GM12878 (cell line): ENCODE measurements at regions of chr20 and their contacts with region 1.

Region 1: DNA sequence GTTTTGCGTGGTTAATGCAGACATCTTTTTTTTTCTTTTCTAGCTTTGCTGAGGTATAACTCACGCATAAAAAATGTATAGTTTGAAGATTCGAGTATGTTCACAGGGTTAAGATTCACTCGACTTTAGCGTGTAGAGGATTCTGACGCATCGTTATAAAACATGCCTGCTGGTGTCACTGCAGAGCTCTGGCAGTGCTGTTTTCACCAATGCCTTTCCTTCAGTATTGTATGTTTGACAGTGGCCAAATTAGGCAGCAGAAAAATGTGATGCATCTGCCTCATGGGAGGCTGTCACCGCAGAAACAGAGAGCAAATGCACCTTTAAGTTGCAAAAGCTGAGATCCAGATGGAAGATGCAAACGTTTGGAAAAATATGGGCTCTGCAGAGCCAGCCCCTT is 18.0 kb upstream of the SIRPB2 start:
- DNase-seq: no peak
- ATAC-seq: peak; percentile 98
- H3K4me3 ChIP-seq: no peak overlapping the region
- H3K27ac ChIP-seq: no peak overlapping the region
- H3K4me1 ChIP-seq: 0 out of 2 replicates have a peak, but pooled peaks cover 3% of the 10 kb centered on the region
- H3K27me3 ChIP-seq: peaks cover 0 to 8% of the 10 kb centered on the region in 2 experiments; a peak in 1 of 4 replicates
- CTCF ChIP-seq: peak; percentile 59 to 68 (median 60)
- EP300 ChIP-seq: no peak
- POLR2A ChIP-seq: no peak
- RAD21 ChIP-seq: peak; percentile 87

Region 2: GRCh38 chr20:1437235-1437904 is 71.9 kb before region 1 on chr20:
- CTCF ChIA-PET with region 1: interaction called, 65 read pairs
- POLR2A ChIA-PET with region 1: no interaction called
- RAD21 ChIA-PET with region 1: interaction called, 16 read pairs
- SMC1A ChIA-PET with region 1: no interaction called
- in situ Hi-C with region 1: no loop called
- intact Hi-C with region 1: no loop called
- DNase-seq: peak; percentile 40
- ATAC-seq: peak; percentile 77
- H3K4me3 ChIP-seq: no peak overlapping the region
- H3K27ac ChIP-seq: no peak overlapping the region
- H3K4me1 ChIP-seq: peaks cover 11% of the 10 kb centered on the region
- H3K27me3 ChIP-seq: no peaks in the 10 kb centered on the region
- CTCF ChIP-seq: peak; percentile 82 to 84 (median 83)
- EP300 ChIP-seq: no peak
- POLR2A ChIP-seq: no peak
- RAD21 ChIP-seq: peak; percentile 91

Region 3: GRCh38 chr20:1535420-1536175 is 26.4 kb after region 1 on chr20:
- CTCF ChIA-PET with region 1: interaction called, 14 read pairs
- POLR2A ChIA-PET with region 1: no interaction called
- RAD21 ChIA-PET with region 1: interaction called, 7 read pairs
- SMC1A ChIA-PET with region 1: interaction called, 15 read pairs
- in situ Hi-C with region 1: no loop called
- intact Hi-C with region 1: loop called (anchors 1 kb)
- DNase-seq: peak; percentile 96
- ATAC-seq: peak; percentile 87
- H3K4me3 ChIP-seq: no peak overlapping the region
- H3K27ac ChIP-seq: peak overlapping the region; percentile 40
- H3K4me1 ChIP-seq: peaks cover 38% of the 10 kb centered on the region
- H3K27me3 ChIP-seq: peaks cover 0 to 1% of the 10 kb centered on the region in 2 experiments; a peak in 1 of 4 replicates
- CTCF ChIP-seq: no peak
- EP300 ChIP-seq: peak in 1 of 2 experiments; percentile 86; a peak in 2 of 4 replicates
- POLR2A ChIP-seq: no peak
- RAD21 ChIP-seq: no peak

Region 4: DNA sequence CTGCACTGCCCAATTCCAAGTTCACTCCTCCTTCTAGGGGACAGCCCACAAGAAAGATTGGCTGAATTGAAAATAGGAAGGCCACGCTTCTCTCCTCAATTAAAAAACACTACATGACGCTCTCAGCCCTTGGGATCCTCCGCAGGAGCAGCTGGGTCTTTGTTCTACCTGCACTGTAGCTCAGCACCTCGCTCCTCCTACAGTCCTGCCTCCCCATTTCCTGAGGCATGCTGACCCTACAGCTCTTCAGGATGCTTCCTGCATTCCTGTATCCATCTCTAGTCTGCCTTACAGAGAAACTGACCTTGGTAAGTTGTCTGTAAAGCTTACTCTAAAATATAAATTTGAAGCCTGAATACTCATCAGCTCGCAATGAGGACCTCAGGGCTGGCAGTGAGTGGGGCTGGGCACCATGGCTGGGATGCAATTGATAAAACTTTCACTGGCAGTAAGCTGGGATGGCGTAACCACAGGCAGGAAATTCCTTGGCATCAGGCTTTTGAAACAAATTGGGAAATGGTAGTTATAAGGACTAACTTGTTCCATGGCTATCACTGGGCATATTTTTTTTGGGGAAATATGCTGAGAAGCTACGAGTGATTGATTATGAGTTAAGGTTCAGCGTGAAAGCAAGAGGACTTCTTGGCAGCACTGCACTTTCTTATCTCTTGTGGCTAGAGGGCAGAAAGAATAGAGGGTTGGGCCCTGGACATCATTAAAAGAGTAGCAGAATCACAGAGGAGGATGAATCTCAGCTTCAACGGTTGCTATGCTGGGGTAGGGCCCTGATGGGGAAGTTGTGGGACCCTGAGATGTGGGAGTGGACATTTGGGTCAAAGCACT is 122.3 kb after region 1 on chr20:
- CTCF ChIA-PET with region 1: interaction called, 7 read pairs
- POLR2A ChIA-PET with region 1: no interaction called
- RAD21 ChIA-PET with region 1: interaction called, 10 read pairs
- SMC1A ChIA-PET with region 1: interaction called, 8 read pairs
- in situ Hi-C with region 1: no loop called
- intact Hi-C with region 1: loop called (anchors 5 kb)
- DNase-seq: no peak
- ATAC-seq: peak; percentile 51
- H3K4me3 ChIP-seq: no peak overlapping the region
- H3K27ac ChIP-seq: no peak overlapping the region
- H3K4me1 ChIP-seq: peaks cover 9% of the 10 kb centered on the region
- H3K27me3 ChIP-seq: no peaks in the 10 kb centered on the region
- CTCF ChIP-seq: no peak
- EP300 ChIP-seq: no peak
- POLR2A ChIP-seq: no peak
- RAD21 ChIP-seq: no peak

Region 5: DNA sequence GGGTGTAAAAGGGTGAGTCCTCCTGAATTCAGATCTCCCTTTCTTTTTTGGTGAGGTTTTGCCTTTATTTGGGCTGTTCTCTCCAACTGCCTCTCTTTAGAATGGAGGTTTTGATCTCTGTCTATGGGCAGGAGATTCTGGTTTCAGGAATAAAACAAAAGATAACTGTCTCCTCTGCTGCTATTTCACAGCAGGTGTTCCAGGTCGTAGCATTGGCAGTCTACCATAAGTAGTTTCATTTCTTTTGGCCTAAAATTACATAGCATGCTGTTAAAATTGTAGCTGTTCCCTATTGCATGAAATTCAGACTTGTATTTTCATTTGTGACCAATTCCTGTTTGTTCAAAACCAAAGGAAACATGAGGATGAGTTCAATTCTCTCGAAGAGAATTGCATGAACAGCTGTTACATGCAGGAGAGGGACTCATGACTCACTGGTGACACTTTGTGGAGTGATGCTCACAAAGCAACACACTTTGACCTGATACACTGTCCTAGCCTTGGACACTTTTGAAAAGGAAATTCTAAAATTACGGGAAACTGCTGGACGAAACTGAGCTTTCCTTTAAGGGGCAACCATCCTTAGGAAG is 225.1 kb after region 1 on chr20:
- CTCF ChIA-PET with region 1: interaction called, 53 read pairs
- POLR2A ChIA-PET with region 1: no interaction called
- RAD21 ChIA-PET with region 1: interaction called, 44 read pairs
- SMC1A ChIA-PET with region 1: interaction called, 138 read pairs
- in situ Hi-C with region 1: no loop called
- intact Hi-C with region 1: loop called (anchors 1 kb)
- DNase-seq: no peak
- ATAC-seq: peak; percentile 91
- H3K4me3 ChIP-seq: no peak overlapping the region
- H3K27ac ChIP-seq: no peak overlapping the region; the same call in 1 of the 2 replicates
- H3K4me1 ChIP-seq: peaks cover 16% of the 10 kb centered on the region
- H3K27me3 ChIP-seq: no peaks in the 10 kb centered on the region
- CTCF ChIP-seq: peak; percentile 48 to 69 (median 60); a peak in 5 of 6 replicates
- EP300 ChIP-seq: no peak
- POLR2A ChIP-seq: no peak
- RAD21 ChIP-seq: peak; percentile 97

Region 6: GRCh38 chr20:1764136-1765033 is 255.1 kb after region 1 on chr20:
- CTCF ChIA-PET with region 1: interaction called, 13 read pairs
- POLR2A ChIA-PET with region 1: no interaction called
- RAD21 ChIA-PET with region 1: interaction called, 6 read pairs
- SMC1A ChIA-PET with region 1: interaction called, 19 read pairs
- in situ Hi-C with region 1: no loop called
- intact Hi-C with region 1: no loop called
- DNase-seq: peak; percentile 57
- ATAC-seq: peak; percentile 100
- H3K4me3 ChIP-seq: no peak overlapping the region
- H3K27ac ChIP-seq: no peak overlapping the region
- H3K4me1 ChIP-seq: peaks cover 4% of the 10 kb centered on the region
- H3K27me3 ChIP-seq: peaks cover 0 to 2% of the 10 kb centered on the region in 2 experiments; a peak in 2 of 4 replicates
- CTCF ChIP-seq: peak; percentile 80 to 89 (median 81)
- EP300 ChIP-seq: no peak
- POLR2A ChIP-seq: no peak
- RAD21 ChIP-seq: peak; percentile 79